Calu3 (cell line): ENCODE measurements at regions of chr4 and their contacts with region 1.

Region 1: GRCh38 chr4:94732358-94732698 is 25.4 kb upstream of the BMPR1B start:
- DNase-seq: no peak
- H3K4me3 Mint-ChIP-seq: no peak overlapping the region
- H3K27ac Mint-ChIP-seq: no peak overlapping the region
- H3K4me1 Mint-ChIP-seq: peaks cover 37% of the 10 kb centered on the region
- H3K27me3 Mint-ChIP-seq: no peaks in the 10 kb centered on the region
- CTCF ChIP-seq: no peak

Region 2: GRCh38 chr4:94406668-94407437 is 325.5 kb before region 1 on chr4:
- CTCF ChIA-PET with region 1: no interaction called
- intact Hi-C with region 1: loop called (anchors 10 kb)
- DNase-seq: peak; percentile 68
- H3K4me3 Mint-ChIP-seq: no peak overlapping the region
- H3K27ac Mint-ChIP-seq: no peak overlapping the region
- H3K4me1 Mint-ChIP-seq: peaks cover 10% of the 10 kb centered on the region
- H3K27me3 Mint-ChIP-seq: no peaks in the 10 kb centered on the region
- CTCF ChIP-seq: no peak

Region 3: GRCh38 chr4:94621491-94622080 is 110.7 kb before region 1 on chr4:
- CTCF ChIA-PET with region 1: interaction called, 11 read pairs
- intact Hi-C with region 1: loop called (anchors 1 kb)
- DNase-seq: peak; percentile 27
- H3K4me3 Mint-ChIP-seq: no peak overlapping the region
- H3K27ac Mint-ChIP-seq: no peak overlapping the region
- H3K4me1 Mint-ChIP-seq: peaks cover 8% of the 10 kb centered on the region
- H3K27me3 Mint-ChIP-seq: no peaks in the 10 kb centered on the region
- CTCF ChIP-seq: peak; percentile 35

Region 4: GRCh38 chr4:94641702-94642560 is 90.4 kb before region 1 on chr4:
- CTCF ChIA-PET with region 1: interaction called, 5 read pairs
- intact Hi-C with region 1: loop called (anchors 5 kb)
- DNase-seq: no peak
- H3K4me3 Mint-ChIP-seq: no peak overlapping the region
- H3K27ac Mint-ChIP-seq: peak overlapping the region; percentile 91
- H3K4me1 Mint-ChIP-seq: peaks cover 31% of the 10 kb centered on the region
- H3K27me3 Mint-ChIP-seq: no peaks in the 10 kb centered on the region
- CTCF ChIP-seq: no peak